ENCODE measurements at regions of chr11 and their contacts with region 1.

Region 1: GRCh38 chr11:65558002-65558931 is at the start of gene LTBP3:
- DNase-seq: no peak
- ATAC-seq: peak; percentile 56
- H3K4me3 Mint-ChIP-seq: peak within 1 kb of the TSS; percentile 70
- H3K27ac Mint-ChIP-seq: peak within 1 kb of the TSS; percentile 81
- H3K4me1 Mint-ChIP-seq: peaks cover 48% of the 10 kb centered on the region
- H3K27me3 Mint-ChIP-seq: no peaks in the 10 kb centered on the region
- total RNA-seq, gene LTBP3: 46.2 to 46.8 TPM

Region 2: DNA sequence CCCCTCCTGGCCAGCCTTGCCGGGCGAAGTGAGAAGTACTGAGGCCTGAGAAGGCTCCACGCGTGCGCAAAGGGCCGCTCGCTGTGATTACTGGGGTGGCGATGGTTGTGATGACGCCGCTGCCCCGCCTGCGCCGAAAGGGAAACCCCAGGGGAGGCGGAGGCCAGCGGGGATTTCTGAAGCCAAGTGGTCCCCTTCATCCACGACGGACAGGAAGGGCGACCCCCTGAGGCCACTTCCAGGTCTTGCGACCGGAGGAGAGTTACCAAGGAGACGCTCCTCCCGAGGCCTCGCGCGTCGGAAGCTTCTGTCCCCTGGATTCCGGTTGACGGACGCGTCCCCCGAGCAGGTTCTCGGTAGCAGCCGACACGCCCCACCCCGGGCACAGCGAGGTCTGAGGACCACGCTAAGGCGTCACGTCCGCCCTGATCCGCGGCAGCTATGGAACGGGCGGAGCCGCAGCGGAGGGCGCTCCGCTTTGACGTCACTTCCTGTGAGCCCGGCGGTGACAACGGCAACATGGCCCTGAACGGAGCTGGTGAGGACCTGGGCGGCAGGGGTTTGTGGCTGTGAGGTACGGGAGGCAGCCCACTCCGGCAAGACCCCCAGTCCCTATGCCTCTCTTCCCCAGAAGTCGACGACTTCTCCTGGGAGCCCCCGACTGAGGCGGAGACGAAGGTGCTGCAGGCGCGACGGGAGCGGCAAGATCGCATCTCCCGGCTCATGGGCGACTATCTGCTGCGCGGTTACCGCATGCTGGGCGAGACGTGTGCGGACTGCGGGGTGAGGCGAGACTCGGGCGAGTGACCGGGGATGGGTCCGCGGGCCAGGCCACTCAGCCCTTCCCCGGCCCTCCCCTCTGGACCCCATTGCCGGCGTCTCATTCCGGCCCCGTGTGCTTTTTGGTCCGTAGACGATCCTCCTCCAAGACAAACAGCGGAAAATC is 12.0 kb after region 1 on chr11 and contains the start of gene ZNRD2:
- CTCF ChIA-PET with region 1: interaction called, 388 read pairs
- DNase-seq: peak; percentile 100
- ATAC-seq: peak; percentile 74
- H3K4me3 Mint-ChIP-seq: peak within 1 kb of the TSS; percentile 100
- H3K27ac Mint-ChIP-seq: peak within 1 kb of the TSS; percentile 98
- H3K4me1 Mint-ChIP-seq: peaks cover 66% of the 10 kb centered on the region
- H3K27me3 Mint-ChIP-seq: no peaks in the 10 kb centered on the region
- total RNA-seq, gene ZNRD2: 42.1 to 45.5 TPM

Measured in activated CD8-positive, alpha-beta memory T cell treated with anti-CD3 and anti-CD28 coated beads, Interleukin-2, amount 10 ng/mL, durations not matched to agents 7 days and 5 days (primary cell).